Psoas muscle (tissue), 8 donors: ENCODE measurements at regions of chr6 and their contacts with region 1.

Region 1: GRCh38 chr6:113909234-113909856 is 52.2 kb downstream of the MARCKS start:
- DNase-seq: no peak
- ATAC-seq: peak in 2 of 4 donors; percentile 42 to 70
- H3K4me3 ChIP-seq: no peak overlapping the region
- H3K27ac ChIP-seq: no peak overlapping the region
- H3K4me1 ChIP-seq: no peaks in the 10 kb centered on the region
- H3K27me3 ChIP-seq: no peaks in the 10 kb centered on the region
- CTCF ChIP-seq: peak; percentile 76

Region 2: GRCh38 chr6:112180095-112180820 is 1729.1 kb before region 1 on chr6:
- intact Hi-C with region 1: loop called in 1 of 2 experiments (anchors 10 kb)
- DNase-seq: no peak
- ATAC-seq: peak in 1 of 4 donors; percentile 74
- H3K4me3 ChIP-seq: no peak overlapping the region
- H3K27ac ChIP-seq: no peak overlapping the region
- H3K4me1 ChIP-seq: no peaks in the 10 kb centered on the region
- H3K27me3 ChIP-seq: peaks cover 0 to 6% (median 0%) of the 10 kb centered on the region in 3 donors
- CTCF ChIP-seq: peak; percentile 70

Region 3: GRCh38 chr6:112780498-112781096 is 1128.7 kb before region 1 on chr6:
- intact Hi-C with region 1: loop called (anchors 2 to 5 kb)
- DNase-seq: peak; percentile 39 to 48
- ATAC-seq: peak; percentile 70 to 90 (median 84)
- H3K4me3 ChIP-seq: no peak overlapping the region
- H3K27ac ChIP-seq: no peak overlapping the region
- H3K4me1 ChIP-seq: no peaks in the 10 kb centered on the region
- H3K27me3 ChIP-seq: no peaks in the 10 kb centered on the region
- CTCF ChIP-seq: peak; percentile 89